PC-3 (cell line): ENCODE measurements at regions of chr12 and their contacts with region 1.

Region 1: DNA sequence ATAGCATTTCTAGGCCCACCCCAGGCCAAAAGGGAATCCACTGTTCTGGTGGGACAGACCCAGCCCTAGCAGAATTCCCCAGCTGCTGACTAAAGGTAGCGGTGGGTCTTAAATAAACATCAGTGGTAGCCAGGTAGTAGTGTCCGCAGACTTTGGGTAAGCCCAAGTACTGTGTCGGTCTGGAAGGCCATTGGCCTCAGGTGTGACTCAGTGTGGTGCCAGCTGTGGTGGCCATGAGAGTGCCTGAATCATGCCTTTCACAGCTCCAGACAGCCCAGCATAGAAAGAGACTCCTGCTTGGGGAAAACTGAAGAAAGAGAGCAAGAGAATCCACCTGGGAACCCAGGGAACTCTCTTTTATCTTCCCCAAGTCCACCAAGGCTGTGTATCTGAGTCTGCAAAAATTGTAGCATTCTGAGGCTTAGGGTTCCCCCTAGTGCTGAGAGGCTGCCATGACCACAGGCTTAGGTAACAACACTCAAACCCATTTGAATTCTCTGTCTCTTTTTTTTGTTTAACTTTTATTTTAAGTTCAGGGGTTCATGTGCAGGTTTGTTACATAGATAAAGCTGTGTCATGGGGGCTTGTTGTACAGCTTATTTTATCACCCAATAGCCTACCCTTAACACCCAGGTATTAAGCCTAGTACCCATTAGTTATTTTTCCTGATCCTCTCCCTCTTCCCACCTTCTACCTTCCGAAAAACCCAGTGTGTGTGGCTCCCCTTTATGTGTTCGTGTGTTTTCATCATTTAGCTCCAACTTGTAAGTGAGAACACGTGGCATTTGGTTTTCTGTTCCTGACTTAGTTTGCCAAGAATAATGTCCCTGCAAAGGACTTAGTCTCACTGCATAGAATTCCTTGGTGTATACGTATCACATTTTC is 16.7 kb upstream of the CD163L1 start:
- DNase-seq: peak; percentile 53
- ATAC-seq: peak; percentile 76
- H3K4me3 ChIP-seq: no peak overlapping the region
- H3K27ac ChIP-seq: no peak overlapping the region
- H3K4me1 ChIP-seq: no peaks in the 10 kb centered on the region
- H3K27me3 ChIP-seq: no peaks in the 10 kb centered on the region
- CTCF ChIP-seq: peak; percentile 75

Region 2: DNA sequence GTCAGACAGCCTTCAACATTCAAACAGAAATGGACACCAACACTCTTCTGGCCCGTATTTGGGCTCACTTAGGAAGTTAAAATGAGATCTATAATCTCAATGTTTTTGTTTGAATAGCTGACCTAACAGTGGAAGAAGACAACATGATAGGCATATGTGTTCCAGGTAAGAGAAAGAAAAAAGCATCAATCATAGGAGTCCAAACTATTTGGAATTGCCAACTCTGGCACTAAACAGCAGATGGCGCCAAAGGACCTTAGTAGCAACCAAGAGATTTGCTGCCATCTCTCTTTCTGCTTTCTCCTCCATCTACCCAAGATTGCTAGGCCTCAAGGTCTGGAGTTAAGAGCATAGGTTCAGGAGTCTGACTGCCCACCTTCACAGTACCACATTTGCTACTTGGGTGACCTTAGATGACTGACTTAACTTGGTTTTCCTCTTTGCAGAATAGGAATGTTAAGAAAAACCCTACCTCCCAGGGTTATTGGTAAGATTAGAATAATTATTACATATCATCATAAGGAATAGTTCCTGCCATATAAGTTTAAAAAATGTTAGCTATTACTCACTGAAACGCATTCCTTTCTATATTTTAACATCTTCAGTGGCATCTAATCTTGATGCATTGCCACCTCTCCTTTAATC is 240.9 kb before region 1 on chr12:
- CTCF ChIA-PET with region 1: no interaction called
- POLR2A ChIA-PET with region 1: no interaction called
- intact Hi-C with region 1: loop called (anchors 1 kb)
- DNase-seq: peak; percentile 74
- ATAC-seq: peak; percentile 65
- H3K4me3 ChIP-seq: no peak overlapping the region
- H3K27ac ChIP-seq: no peak overlapping the region
- H3K4me1 ChIP-seq: no peaks in the 10 kb centered on the region
- H3K27me3 ChIP-seq: no peaks in the 10 kb centered on the region
- CTCF ChIP-seq: peak; percentile 88